Aorta (tissue), 5 donors: ENCODE measurements at regions of chr9 and their contacts with region 1.

Region 1: DNA sequence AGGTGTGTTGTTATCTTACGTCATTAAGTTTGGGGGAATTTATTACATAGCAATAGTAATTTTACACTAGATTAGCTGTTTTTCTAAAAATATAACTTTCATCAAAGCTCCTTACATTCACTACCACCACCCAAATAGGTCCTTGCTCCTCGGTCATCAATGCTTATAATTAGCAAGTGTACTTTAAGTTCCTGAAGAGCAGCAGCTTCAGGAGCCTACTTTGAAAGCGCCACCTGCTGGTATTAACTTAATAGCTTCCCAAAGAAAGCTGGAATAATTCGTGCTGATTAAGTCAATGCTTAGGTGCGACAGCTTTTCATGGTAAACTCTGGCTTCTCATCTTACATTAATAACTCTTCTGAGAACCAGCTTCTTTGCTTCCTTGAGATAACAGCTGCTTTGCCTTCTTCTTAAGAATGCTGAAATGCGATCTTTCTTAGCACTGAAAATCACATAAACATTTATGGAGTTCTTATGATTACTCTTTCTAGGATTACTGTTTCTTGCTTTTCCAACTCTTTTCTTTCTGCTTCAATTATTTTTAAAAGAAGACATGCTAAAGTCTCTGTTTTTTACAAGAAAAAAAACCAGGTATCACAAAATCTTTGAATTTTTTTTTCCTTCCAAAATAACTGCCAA is 10.0 kb upstream of the C5 start:
- DNase-seq: no peak
- ATAC-seq: peak; percentile 72
- H3K4me3 ChIP-seq: no peak overlapping the region
- H3K27ac ChIP-seq: no peak overlapping the region
- H3K4me1 ChIP-seq: no peaks in the 10 kb centered on the region
- H3K27me3 ChIP-seq: no peaks in the 10 kb centered on the region

Region 2: DNA sequence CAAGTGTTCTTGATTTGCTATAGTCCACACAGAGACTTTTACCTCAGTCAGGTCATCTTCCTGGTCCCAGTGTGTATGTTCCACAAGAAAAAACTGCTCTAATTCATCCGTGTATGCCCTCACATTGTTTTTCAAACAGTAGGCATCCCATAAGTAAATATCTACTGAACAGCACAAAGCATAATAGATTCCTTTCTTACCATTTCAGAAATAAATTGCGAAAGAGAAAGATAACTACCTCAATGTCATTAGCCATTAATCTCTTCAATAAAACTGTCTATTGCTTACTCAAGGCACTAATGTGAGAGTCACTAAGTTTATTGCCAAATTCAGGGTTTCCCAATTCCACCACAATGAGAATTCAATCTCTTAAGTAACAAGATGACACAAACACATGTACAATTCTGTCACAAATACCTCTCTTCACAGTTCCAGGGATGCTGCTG is 276.5 kb before region 1 on chr9:
- intact Hi-C with region 1: no loop called
- DNase-seq: no peak
- ATAC-seq: no peak
- H3K4me3 ChIP-seq: no peak overlapping the region
- H3K27ac ChIP-seq: no peak overlapping the region
- H3K4me1 ChIP-seq: peaks cover 2 to 3% of the 10 kb centered on the region in 2 donors
- H3K27me3 ChIP-seq: no peaks in the 10 kb centered on the region

Region 3: GRCh38 chr9:120985810-120986222 is 74.3 kb before region 1 on chr9:
- intact Hi-C with region 1: loop called (anchors 2 to 5 kb)
- DNase-seq: no peak
- ATAC-seq: no peak
- H3K4me3 ChIP-seq: no peak overlapping the region
- H3K27ac ChIP-seq: no peak overlapping the region
- H3K4me1 ChIP-seq: peaks cover 0 to 2% of the 10 kb centered on the region in 2 donors
- H3K27me3 ChIP-seq: no peaks in the 10 kb centered on the region

Region 4: GRCh38 chr9:121138973-121139372 is 78.9 kb after region 1 on chr9:
- intact Hi-C with region 1: no loop called
- DNase-seq: no peak
- ATAC-seq: no peak
- H3K4me3 ChIP-seq: no peak overlapping the region
- H3K27ac ChIP-seq: no peak overlapping the region
- H3K4me1 ChIP-seq: no peaks in the 10 kb centered on the region
- H3K27me3 ChIP-seq: no peaks in the 10 kb centered on the region